ENCODE measurements at regions of chr6 and their contacts with region 1.

Region 1: GRCh38 chr6:107847844-107848802 is 24.0 kb upstream of the SCML4 start:
- DNase-seq: no peak
- ATAC-seq: peak; percentile 98
- H3K4me3 ChIP-seq: peak overlapping the region; percentile 24; the same call in 1 of the 2 replicates
- H3K27ac ChIP-seq: no peak overlapping the region
- H3K4me1 ChIP-seq: no peaks in the 10 kb centered on the region
- H3K27me3 ChIP-seq: peaks cover 1 to 3% of the 10 kb centered on the region in 2 experiments
- CTCF ChIP-seq: peak; percentile 83 to 92 (median 85)
- EP300 ChIP-seq: no peak
- POLR2A ChIP-seq: no peak
- RAD21 ChIP-seq: peak; percentile 65

Region 2: DNA sequence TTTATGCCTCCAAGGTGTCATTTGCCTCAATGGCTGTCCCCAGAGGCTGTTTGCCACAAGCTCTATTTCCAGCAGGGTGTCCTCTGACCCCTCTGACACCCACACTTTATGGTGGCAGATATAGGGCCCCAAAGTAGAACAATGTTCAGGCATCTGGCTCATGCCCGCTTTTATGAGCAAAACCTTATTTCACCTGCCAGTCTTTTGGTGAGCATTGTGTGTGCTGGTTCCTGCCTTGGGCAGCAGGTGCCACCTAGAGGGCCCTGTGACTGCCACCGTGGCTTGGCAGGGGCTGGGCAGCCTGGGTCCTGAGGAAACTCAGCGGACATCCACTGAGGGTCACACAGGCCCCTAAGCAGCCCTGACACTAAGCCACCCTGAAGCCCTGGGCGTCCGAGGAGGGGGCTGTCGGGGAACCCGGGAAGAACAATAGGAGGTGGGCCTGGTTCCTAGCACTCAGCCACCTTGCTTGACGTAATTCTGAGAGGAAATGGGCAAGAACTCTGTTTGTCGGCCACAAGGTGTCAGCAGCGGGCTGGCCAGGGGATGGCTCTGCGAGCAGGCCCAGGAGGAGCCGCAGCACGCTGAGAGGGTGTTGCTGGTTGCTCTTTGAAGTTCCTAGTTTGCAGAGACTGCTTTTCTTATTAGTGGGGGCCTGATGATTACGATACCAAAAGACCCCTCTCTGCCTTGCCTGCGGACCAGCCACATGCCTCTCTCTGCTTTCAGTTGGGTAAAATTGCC is 173.0 kb before region 1 on chr6:
- CTCF ChIA-PET with region 1: interaction called, 47 read pairs
- POLR2A ChIA-PET with region 1: no interaction called
- RAD21 ChIA-PET with region 1: interaction called, 27 read pairs
- SMC1A ChIA-PET with region 1: interaction called, 30 read pairs
- in situ Hi-C with region 1: loop called (anchors 5 kb)
- intact Hi-C with region 1: loop called (anchors 1 kb)
- DNase-seq: peak; percentile 45
- ATAC-seq: peak; percentile 96
- H3K4me3 ChIP-seq: no peak overlapping the region; the same call in 1 of the 2 replicates
- H3K27ac ChIP-seq: peak overlapping the region; percentile 42; the same call in 1 of the 2 replicates
- H3K4me1 ChIP-seq: peaks cover 19% of the 10 kb centered on the region
- H3K27me3 ChIP-seq: no peaks in the 10 kb centered on the region
- CTCF ChIP-seq: peak; percentile 86 to 94 (median 87)
- EP300 ChIP-seq: no peak
- POLR2A ChIP-seq: no peak
- RAD21 ChIP-seq: peak; percentile 96

Region 3: GRCh38 chr6:107800564-107801164 is 47.5 kb before region 1 on chr6:
- CTCF ChIA-PET with region 1: interaction called, 14 read pairs
- POLR2A ChIA-PET with region 1: no interaction called
- RAD21 ChIA-PET with region 1: interaction called, 5 read pairs
- SMC1A ChIA-PET with region 1: interaction called, 6 read pairs
- in situ Hi-C with region 1: no loop called
- intact Hi-C with region 1: loop called (anchors 1 kb)
- DNase-seq: no peak
- ATAC-seq: no peak
- H3K4me3 ChIP-seq: no peak overlapping the region
- H3K27ac ChIP-seq: no peak overlapping the region
- H3K4me1 ChIP-seq: no peaks in the 10 kb centered on the region
- H3K27me3 ChIP-seq: no peaks in the 10 kb centered on the region
- CTCF ChIP-seq: peak; percentile 27 to 49 (median 34); a peak in 4 of 6 replicates
- EP300 ChIP-seq: no peak
- POLR2A ChIP-seq: no peak
- RAD21 ChIP-seq: peak; percentile 46

Region 4: GRCh38 chr6:107822176-107823046 is 25.7 kb before region 1 on chr6:
- CTCF ChIA-PET with region 1: interaction called, 25 read pairs
- POLR2A ChIA-PET with region 1: no interaction called
- RAD21 ChIA-PET with region 1: interaction called, 17 read pairs
- SMC1A ChIA-PET with region 1: interaction called, 16 read pairs
- in situ Hi-C with region 1: no loop called
- intact Hi-C with region 1: no loop called
- DNase-seq: peak; percentile 21
- ATAC-seq: peak; percentile 76
- H3K4me3 ChIP-seq: peak overlapping the region; percentile 17; the same call in 1 of the 2 replicates
- H3K27ac ChIP-seq: no peak overlapping the region
- H3K4me1 ChIP-seq: peaks cover 9% of the 10 kb centered on the region
- H3K27me3 ChIP-seq: peaks cover 0 to 12% of the 10 kb centered on the region in 2 experiments; a peak in 3 of 4 replicates
- CTCF ChIP-seq: no peak
- EP300 ChIP-seq: no peak
- POLR2A ChIP-seq: no peak
- RAD21 ChIP-seq: no peak

Region 5: DNA sequence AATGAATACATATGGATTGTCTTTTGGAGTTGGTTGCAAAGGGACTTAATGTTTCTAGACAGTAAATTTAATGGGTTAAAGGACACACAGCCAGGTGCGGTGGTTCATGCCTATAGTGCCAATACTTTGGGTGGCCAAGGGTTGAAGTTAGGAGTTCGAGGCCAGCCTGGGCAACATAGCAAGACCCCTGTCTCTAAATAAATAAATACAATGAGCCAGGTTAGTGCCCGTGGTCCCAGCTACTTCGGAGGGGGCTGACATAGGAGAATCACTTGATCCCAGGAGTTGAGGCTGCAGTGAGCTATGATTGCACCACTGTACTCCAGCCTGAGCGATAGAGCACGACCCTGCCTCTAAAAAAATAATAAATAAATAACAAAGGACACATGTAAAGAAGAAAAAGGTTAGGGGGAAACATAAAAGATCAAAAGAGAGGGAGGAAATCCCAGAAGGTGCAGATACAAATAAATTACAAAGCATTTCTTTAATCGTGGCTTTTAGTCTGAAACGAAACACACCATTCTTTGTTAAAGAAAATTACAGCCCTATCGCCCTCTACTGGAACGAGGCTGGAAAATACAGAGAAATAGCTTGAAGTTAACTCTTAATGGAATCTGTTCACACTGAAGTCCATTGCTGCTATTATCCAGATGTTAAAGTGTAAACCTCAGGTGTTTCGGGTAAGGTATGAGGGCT is 18.6 kb after region 1 on chr6:
- CTCF ChIA-PET with region 1: interaction called, 39 read pairs
- POLR2A ChIA-PET with region 1: no interaction called
- RAD21 ChIA-PET with region 1: interaction called, 8 read pairs
- SMC1A ChIA-PET with region 1: interaction called, 9 read pairs
- in situ Hi-C with region 1: no loop called
- intact Hi-C with region 1: no loop called
- DNase-seq: no peak
- ATAC-seq: peak; percentile 74
- H3K4me3 ChIP-seq: no peak overlapping the region
- H3K27ac ChIP-seq: no peak overlapping the region
- H3K4me1 ChIP-seq: 0 out of 2 replicates have a peak, but pooled peaks cover 5% of the 10 kb centered on the region
- H3K27me3 ChIP-seq: no peaks in the 10 kb centered on the region
- CTCF ChIP-seq: peak; percentile 35 to 68 (median 35); a peak in 5 of 6 replicates
- EP300 ChIP-seq: no peak
- POLR2A ChIP-seq: no peak
- RAD21 ChIP-seq: peak; percentile 31; the same call in 1 of the 2 replicates

Region 6: GRCh38 chr6:108052706-108053105 is 204.6 kb after region 1 on chr6:
- CTCF ChIA-PET with region 1: interaction called, 13 read pairs
- POLR2A ChIA-PET with region 1: no interaction called
- RAD21 ChIA-PET with region 1: interaction called, 4 read pairs
- SMC1A ChIA-PET with region 1: interaction called, 5 read pairs
- in situ Hi-C with region 1: no loop called
- intact Hi-C with region 1: no loop called
- DNase-seq: no peak
- ATAC-seq: no peak
- H3K4me3 ChIP-seq: no peak overlapping the region
- H3K27ac ChIP-seq: no peak overlapping the region
- H3K4me1 ChIP-seq: no peaks in the 10 kb centered on the region
- H3K27me3 ChIP-seq: no peaks in the 10 kb centered on the region
- CTCF ChIP-seq: no peak
- EP300 ChIP-seq: no peak
- POLR2A ChIP-seq: no peak
- RAD21 ChIP-seq: no peak

Region 7: GRCh38 chr6:108157234-108157980 is 309.3 kb after region 1 on chr6:
- CTCF ChIA-PET with region 1: no interaction called
- POLR2A ChIA-PET with region 1: no interaction called
- RAD21 ChIA-PET with region 1: no interaction called
- SMC1A ChIA-PET with region 1: no interaction called
- in situ Hi-C with region 1: no loop called
- intact Hi-C with region 1: no loop called
- DNase-seq: no peak
- ATAC-seq: peak; percentile 62
- H3K4me3 ChIP-seq: peak overlapping the region; percentile 29
- H3K27ac ChIP-seq: no peak overlapping the region
- H3K4me1 ChIP-seq: no peaks in the 10 kb centered on the region
- H3K27me3 ChIP-seq: peaks cover 12 to 42% of the 10 kb centered on the region in 2 experiments
- CTCF ChIP-seq: no peak
- EP300 ChIP-seq: no peak
- POLR2A ChIP-seq: no peak
- RAD21 ChIP-seq: no peak